Stomach (tissue), 19 donors: ENCODE measurements at regions of chr13 and their contacts with region 1.

Region 1: GRCh38 chr13:110950819-110951570 is 36.1 kb upstream of the ANKRD10 start:
- DNase-seq: no peak
- H3K4me3 ChIP-seq: no peak overlapping the region
- H3K27ac ChIP-seq: no peak overlapping the region
- H3K4me1 ChIP-seq: peaks cover 0 to 7% (median 2%) of the 10 kb centered on the region in 4 donors
- H3K27me3 ChIP-seq: peaks cover 0 to 4% (median 3%) of the 10 kb centered on the region in 3 donors
- CTCF ChIP-seq: no peak
- EP300 ChIP-seq: no peak
- POLR2A ChIP-seq: no peak

Region 2: GRCh38 chr13:110705826-110706569 is 245.0 kb before region 1 on chr13 and contains the start of gene CARS2:
- intact Hi-C with region 1: no loop called
- DNase-seq: peak; percentile 98 to 99
- H3K4me3 ChIP-seq: peak within 1 kb of the TSS; percentile 64 to 87 (median 78)
- H3K27ac ChIP-seq: peak within 1 kb of the TSS; percentile 83 to 92 (median 88)
- H3K4me1 ChIP-seq: peaks cover 19 to 56% (median 44%) of the 10 kb centered on the region in 4 donors
- H3K27me3 ChIP-seq: no peaks in the 10 kb centered on the region
- CTCF ChIP-seq: peak in 1 of 7 experiments; percentile 19
- EP300 ChIP-seq: peak; percentile 44
- POLR2A ChIP-seq: no peak
- total RNA-seq, gene CARS2: 59.4 to 247 (median 70.0) TPM

Region 3: DNA sequence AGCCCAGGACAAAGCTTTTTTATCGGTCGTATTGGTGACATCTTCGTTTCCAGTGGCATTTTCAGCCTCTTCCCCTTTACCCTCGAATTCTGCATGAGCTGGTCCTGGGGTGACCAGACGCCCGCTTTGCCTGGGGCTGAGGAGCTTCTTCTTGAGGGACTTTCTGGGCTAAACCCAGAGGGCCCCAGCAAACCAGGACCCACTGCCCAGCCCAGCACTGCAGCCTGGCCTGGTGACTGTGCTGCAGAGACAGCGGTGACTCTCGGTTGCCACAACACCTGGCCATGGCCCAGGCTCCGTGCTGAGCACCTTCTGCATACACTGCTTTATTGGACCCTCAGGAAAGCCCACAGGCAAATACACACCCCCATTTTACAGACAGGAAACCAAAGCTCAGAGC is 1446.1 kb after region 1 on chr13:
- intact Hi-C with region 1: loop called (anchors 5 kb)
- DNase-seq: no peak
- H3K4me3 ChIP-seq: no peak overlapping the region
- H3K27ac ChIP-seq: no peak overlapping the region
- H3K4me1 ChIP-seq: no peaks in the 10 kb centered on the region
- H3K27me3 ChIP-seq: peaks cover 0 to 6% (median 5%) of the 10 kb centered on the region in 3 donors
- CTCF ChIP-seq: no peak
- EP300 ChIP-seq: no peak
- POLR2A ChIP-seq: no peak